Activated naive CD4-positive, alpha-beta T cell treated with anti-CD3 and anti-CD28 coated beads for 36 hours (primary cell): ENCODE measurements at regions of chr17 and their contacts with region 1.

Region 1: GRCh38 chr17:77429919-77430752 is 289.4 kb downstream of the SEC14L1 start:
- DNase-seq: peak; percentile 94
- H3K4me3 Mint-ChIP-seq: no peak overlapping the region
- H3K27ac Mint-ChIP-seq: peak overlapping the region; percentile 41
- H3K4me1 Mint-ChIP-seq: peaks cover 92% of the 10 kb centered on the region
- H3K27me3 Mint-ChIP-seq: no peaks in the 10 kb centered on the region

Region 2: GRCh38 chr17:77323413-77324171 is 106.5 kb before region 1 on chr17:
- CTCF ChIA-PET with region 1: interaction called, 5 read pairs
- intact Hi-C with region 1: loop called (anchors 2 kb)
- DNase-seq: peak; percentile 50
- H3K4me3 Mint-ChIP-seq: no peak overlapping the region
- H3K27ac Mint-ChIP-seq: no peak overlapping the region
- H3K4me1 Mint-ChIP-seq: peaks cover 63% of the 10 kb centered on the region
- H3K27me3 Mint-ChIP-seq: no peaks in the 10 kb centered on the region

Region 3: DNA sequence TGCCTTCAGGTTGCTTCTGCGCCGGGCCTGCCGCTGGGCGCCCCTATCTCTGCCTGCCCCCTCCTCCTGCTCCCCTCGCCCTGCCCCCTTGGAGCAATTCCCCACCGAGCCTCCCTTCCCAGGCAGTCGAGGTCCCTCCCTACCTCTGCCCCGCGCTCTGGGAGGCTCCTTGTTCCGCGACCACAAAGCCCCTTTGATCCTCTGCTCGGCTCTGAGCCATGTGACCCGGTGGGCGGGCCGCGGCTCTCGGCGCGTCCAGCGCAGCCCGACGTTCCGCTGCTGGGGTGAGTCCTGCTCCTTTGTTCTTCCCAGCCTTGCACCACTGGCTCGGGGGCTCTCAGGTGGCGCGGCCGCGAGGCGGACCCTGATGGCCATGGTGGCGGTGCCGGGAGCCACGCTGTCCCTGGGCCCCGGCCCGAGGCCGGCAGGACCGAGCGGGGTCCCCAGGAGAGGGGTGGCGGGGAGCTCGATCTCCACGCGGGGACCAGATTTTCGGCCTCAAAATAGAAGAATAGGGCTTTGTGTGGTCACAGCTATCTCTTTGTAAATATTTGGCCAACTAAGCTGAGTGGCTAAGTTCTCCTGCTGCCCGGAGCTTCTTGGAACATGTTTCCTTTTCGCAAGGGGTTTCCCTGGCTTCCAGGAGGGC is 21.2 kb after region 1 on chr17:
- CTCF ChIA-PET with region 1: interaction called, 15 read pairs
- intact Hi-C with region 1: no loop called
- DNase-seq: peak; percentile 83
- H3K4me3 Mint-ChIP-seq: peak overlapping the region; percentile 86
- H3K27ac Mint-ChIP-seq: peak overlapping the region; percentile 100
- H3K4me1 Mint-ChIP-seq: peaks cover 42% of the 10 kb centered on the region
- H3K27me3 Mint-ChIP-seq: no peaks in the 10 kb centered on the region

Region 4: GRCh38 chr17:77465358-77466041 is 35.4 kb after region 1 on chr17:
- CTCF ChIA-PET with region 1: interaction called, 18 read pairs
- intact Hi-C with region 1: loop called (anchors 1 kb)
- DNase-seq: peak; percentile 92
- H3K4me3 Mint-ChIP-seq: peak overlapping the region; percentile 62
- H3K27ac Mint-ChIP-seq: peak overlapping the region; percentile 93
- H3K4me1 Mint-ChIP-seq: peaks cover 86% of the 10 kb centered on the region
- H3K27me3 Mint-ChIP-seq: no peaks in the 10 kb centered on the region

Region 5: GRCh38 chr17:77476931-77477877 is 47.1 kb after region 1 on chr17:
- CTCF ChIA-PET with region 1: interaction called, 16 read pairs
- intact Hi-C with region 1: loop called (anchors 1 kb)
- DNase-seq: peak; percentile 71
- H3K4me3 Mint-ChIP-seq: no peak overlapping the region
- H3K27ac Mint-ChIP-seq: peak overlapping the region; percentile 84
- H3K4me1 Mint-ChIP-seq: peaks cover 76% of the 10 kb centered on the region
- H3K27me3 Mint-ChIP-seq: no peaks in the 10 kb centered on the region